ENCODE measurements at regions of chr2 and their contacts with region 1.

Region 1: DNA sequence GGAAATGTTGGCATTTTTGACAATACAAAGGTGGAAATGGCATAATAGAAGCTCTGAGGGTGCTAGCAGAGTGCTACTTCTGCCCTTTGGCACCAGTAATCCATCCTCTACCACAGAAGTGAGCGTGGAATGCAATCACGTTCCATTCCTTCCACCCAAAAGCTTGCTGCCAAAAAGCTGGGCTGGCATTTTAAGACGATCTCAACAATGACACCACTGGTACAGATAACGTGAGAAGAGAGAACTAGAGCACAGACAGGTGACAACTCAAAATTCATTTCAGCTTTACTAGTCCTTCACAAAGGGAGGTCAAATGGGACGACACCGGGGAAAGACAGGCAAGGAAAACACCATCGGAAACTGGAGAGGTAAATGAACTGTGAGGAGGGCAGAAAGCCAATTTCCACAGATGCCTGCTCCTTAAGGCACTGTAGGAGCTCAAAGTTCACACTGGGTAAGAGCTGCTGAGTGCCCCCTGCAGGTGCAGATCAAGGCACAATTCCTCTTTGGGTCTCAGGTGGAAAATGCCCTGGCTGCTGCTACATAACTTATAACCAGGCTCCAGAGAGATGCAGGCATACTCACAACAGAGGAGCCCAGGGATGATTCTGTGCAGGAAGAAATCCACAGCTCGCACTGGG is 50.7 kb upstream of the RNU4ATAC start:
- DNase-seq: peak in 1 of 10 donors; percentile 71
- H3K4me3 ChIP-seq: peak overlapping the region in 1 of 59 donors; percentile 34
- H3K27ac ChIP-seq: peak overlapping the region in 18 of 59 donors; percentile 7 to 68 (median 23)
- H3K27me3 ChIP-seq: no peaks in the 10 kb centered on the region
- CTCF ChIP-seq: peak in 3 of 56 donors; percentile 7 to 25 (median 17)

Region 2: GRCh38 chr2:121400201-121400600 is 79.8 kb before region 1 on chr2:
- intact Hi-C with region 1: no loop called
- DNase-seq: no peak
- H3K4me3 ChIP-seq: no peak overlapping the region
- H3K27ac ChIP-seq: no peak overlapping the region
- H3K27me3 ChIP-seq: no peaks in the 10 kb centered on the region
- CTCF ChIP-seq: no peak

Region 3: DNA sequence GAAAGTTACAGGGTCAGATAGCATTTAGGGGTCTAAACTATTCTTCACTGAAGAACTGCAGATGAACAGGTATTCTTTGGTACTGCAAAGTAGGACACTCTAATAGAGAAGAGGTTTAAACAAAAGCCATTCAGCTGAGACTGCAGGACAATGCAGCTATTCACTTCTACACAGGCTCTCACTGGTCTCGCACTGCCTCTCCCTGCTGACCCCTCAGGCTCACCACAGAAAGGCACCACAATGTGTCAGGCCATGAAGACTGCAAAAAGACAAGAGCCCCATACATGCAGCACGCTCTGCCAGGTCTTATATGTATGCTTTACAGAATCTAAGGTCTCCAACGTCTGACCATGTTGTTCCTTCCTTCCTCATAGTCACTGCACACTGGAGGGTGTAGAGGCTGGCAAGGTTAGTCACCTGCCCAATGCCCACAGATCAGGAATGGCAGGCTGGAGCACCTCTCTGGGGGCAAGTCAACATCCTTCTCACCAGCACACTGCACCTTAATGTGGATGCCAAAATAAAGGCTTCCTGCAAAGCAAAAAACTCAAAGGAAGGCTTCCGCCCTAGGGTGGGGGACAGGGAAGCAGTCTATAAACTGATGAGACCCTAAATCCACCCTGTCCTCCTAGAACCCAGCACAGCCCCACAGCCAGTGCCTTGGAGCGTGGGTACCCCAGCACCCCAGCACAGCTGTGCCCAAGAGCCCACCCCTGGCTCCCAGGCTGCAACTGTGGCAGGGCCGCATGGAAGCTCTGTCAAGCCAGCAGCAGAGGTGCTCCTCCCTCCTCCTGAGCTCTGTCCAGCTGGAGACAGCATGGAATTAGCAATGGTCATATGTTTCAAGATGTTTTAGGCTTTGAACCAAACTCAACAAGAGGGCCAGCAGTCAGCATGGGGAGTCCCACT is 40.0 kb after region 1 on chr2:
- intact Hi-C with region 1: loop called in 1 of 2 experiments (anchors 5 kb)
- DNase-seq: peak in 9 of 10 donors; percentile 44 to 84 (median 75)
- H3K4me3 ChIP-seq: peak overlapping the region in 2 of 59 donors; percentile 11 to 15
- H3K27ac ChIP-seq: peak overlapping the region; percentile 66 to 98 (median 96)
- H3K27me3 ChIP-seq: no peaks in the 10 kb centered on the region
- CTCF ChIP-seq: peak in 44 of 56 donors; percentile 14 to 72 (median 43)

Region 4: GRCh38 chr2:121539750-121540469 is 59.9 kb after region 1 on chr2:
- intact Hi-C with region 1: no loop called
- DNase-seq: no peak
- H3K4me3 ChIP-seq: peak overlapping the region in 1 of 59 donors; percentile 10
- H3K27ac ChIP-seq: no peak overlapping the region
- H3K27me3 ChIP-seq: no peaks in the 10 kb centered on the region
- CTCF ChIP-seq: no peak

Region 5: DNA sequence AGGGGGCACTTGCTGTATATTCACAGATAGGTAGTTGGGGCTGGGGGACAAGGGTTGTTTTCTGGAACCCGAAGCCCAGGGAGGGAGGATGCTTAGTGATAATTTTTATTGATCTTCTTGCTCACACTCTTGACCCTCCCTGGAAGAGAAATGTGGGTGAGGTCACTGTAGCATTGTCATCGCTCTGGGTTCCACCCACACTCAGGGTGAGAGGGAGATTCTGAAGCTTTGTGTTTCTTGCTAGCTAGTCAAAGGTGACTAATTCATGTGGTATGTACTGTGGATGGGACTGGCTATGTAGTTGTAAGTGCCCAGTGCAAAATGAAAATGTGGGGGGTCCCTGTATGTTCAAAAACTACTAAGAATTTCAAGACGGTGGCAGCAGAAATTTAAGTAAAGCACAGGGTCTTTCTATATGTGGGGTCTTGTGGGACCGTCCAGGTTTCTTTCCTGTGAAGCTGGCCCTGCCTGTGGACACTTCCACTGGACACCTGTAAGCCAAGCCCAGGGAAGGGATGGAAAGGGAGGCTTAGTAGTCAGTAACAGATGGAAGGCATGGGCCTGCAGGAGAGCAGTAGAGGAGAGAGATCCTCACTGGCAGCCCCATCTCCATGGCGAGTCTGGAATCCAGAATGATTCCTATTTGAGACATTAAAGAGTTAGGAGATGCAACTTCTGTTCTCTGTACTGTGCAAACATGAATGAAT is 310.4 kb after region 1 on chr2:
- intact Hi-C with region 1: no loop called
- DNase-seq: no peak
- H3K4me3 ChIP-seq: no peak overlapping the region
- H3K27ac ChIP-seq: no peak overlapping the region
- H3K27me3 ChIP-seq: peaks cover 0 to 9% (median 0%) of the 10 kb centered on the region in 45 donors
- CTCF ChIP-seq: no peak

Measured in dorsolateral prefrontal cortex (tissue), 120 donors.